ENCODE measurements at regions of chr17 and their contacts with region 1.

Region 1: GRCh38 chr17:73311781-73312641 is at the start of gene CDC42EP4:
- DNase-seq: peak; percentile 91
- H3K27ac ChIP-seq: peak within 1 kb of the TSS; percentile 94
- CTCF ChIP-seq: no peak

Region 2: GRCh38 chr17:73255671-73256181 is 56.3 kb before region 1 on chr17:
- CTCF ChIA-PET with region 1: interaction called, 10 read pairs
- POLR2A ChIA-PET with region 1: no interaction called
- DNase-seq: peak; percentile 68
- H3K27ac ChIP-seq: no peak overlapping the region
- CTCF ChIP-seq: peak; percentile 97

Region 3: GRCh38 chr17:73325527-73325842 is 13.5 kb after region 1 on chr17:
- CTCF ChIA-PET with region 1: no interaction called
- POLR2A ChIA-PET with region 1: interaction called, 17 read pairs
- DNase-seq: no peak
- H3K27ac ChIP-seq: peak overlapping the region; percentile 80
- CTCF ChIP-seq: no peak

Region 4: GRCh38 chr17:73342050-73342522 is 30.1 kb after region 1 on chr17:
- CTCF ChIA-PET with region 1: interaction called, 18 read pairs
- POLR2A ChIA-PET with region 1: no interaction called
- DNase-seq: peak; percentile 34
- H3K27ac ChIP-seq: peak overlapping the region; percentile 97
- CTCF ChIP-seq: no peak

Region 5: GRCh38 chr17:73371285-73371684 is 59.3 kb after region 1 on chr17:
- CTCF ChIA-PET with region 1: interaction called, 14 read pairs
- POLR2A ChIA-PET with region 1: no interaction called
- DNase-seq: peak; percentile 49
- H3K27ac ChIP-seq: no peak overlapping the region
- CTCF ChIP-seq: no peak

Measured in RWPE1 (cell line).